Activated naive CD8-positive, alpha-beta T cell treated with anti-CD3 and anti-CD28 coated beads, Interleukin-2, amount 10 ng/mL, durations not matched to agents 7 days and 5 days (primary cell): ENCODE measurements at regions of chr1 and their contacts with region 1.

Region 1: GRCh38 chr1:16366722-16367257 is at the start of gene SZRD1:
- DNase-seq: peak; percentile 91
- ATAC-seq: peak; percentile 90
- H3K4me3 Mint-ChIP-seq: peak within 1 kb of the TSS; percentile 97
- H3K27ac Mint-ChIP-seq: peak within 1 kb of the TSS; percentile 100
- H3K4me1 Mint-ChIP-seq: peaks cover 30% of the 10 kb centered on the region
- H3K27me3 Mint-ChIP-seq: no peaks in the 10 kb centered on the region
- total RNA-seq, gene SZRD1: 126 to 147 TPM

Region 2: DNA sequence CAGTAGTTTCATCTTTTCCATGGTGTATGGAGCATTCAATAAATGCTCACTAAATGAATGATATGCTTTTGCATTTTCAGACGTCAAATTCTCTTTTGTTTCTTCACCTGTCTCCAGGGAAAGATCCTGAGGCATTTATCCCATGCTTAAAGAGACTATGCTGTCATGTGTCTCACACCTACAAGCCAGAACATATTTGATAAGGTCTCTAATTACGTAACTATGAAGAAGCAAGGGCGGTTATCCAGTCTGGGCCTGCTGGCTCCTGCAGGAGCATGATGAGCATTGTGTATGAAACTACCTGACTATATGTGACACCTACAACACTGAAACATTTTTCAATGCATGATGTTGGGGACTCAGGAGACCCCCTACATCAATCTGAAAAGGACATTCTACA is 66.4 kb before region 1 on chr1:
- POLR2A ChIA-PET with region 1: no interaction called
- DNase-seq: no peak
- ATAC-seq: no peak
- H3K4me3 Mint-ChIP-seq: no peak overlapping the region
- H3K27ac Mint-ChIP-seq: no peak overlapping the region
- H3K4me1 Mint-ChIP-seq: no peaks in the 10 kb centered on the region
- H3K27me3 Mint-ChIP-seq: no peaks in the 10 kb centered on the region

Region 3: GRCh38 chr1:16351994-16352841 is 14.6 kb before region 1 on chr1 and contains the start of gene FBXO42:
- POLR2A ChIA-PET with region 1: interaction called, 27 read pairs
- DNase-seq: peak; percentile 98
- ATAC-seq: peak; percentile 96
- H3K4me3 Mint-ChIP-seq: peak within 1 kb of the TSS; percentile 98
- H3K27ac Mint-ChIP-seq: peak within 1 kb of the TSS; percentile 94
- H3K4me1 Mint-ChIP-seq: peaks cover 26% of the 10 kb centered on the region
- H3K27me3 Mint-ChIP-seq: no peaks in the 10 kb centered on the region
- total RNA-seq, gene FBXO42: 22.3 to 25.1 TPM

Region 4: GRCh38 chr1:16386454-16387113 is 19.8 kb after region 1 on chr1:
- POLR2A ChIA-PET with region 1: interaction called, 12 read pairs
- DNase-seq: no peak
- ATAC-seq: peak; percentile 44
- H3K4me3 Mint-ChIP-seq: peak overlapping the region; percentile 87
- H3K27ac Mint-ChIP-seq: peak overlapping the region; percentile 72
- H3K4me1 Mint-ChIP-seq: peaks cover 55% of the 10 kb centered on the region
- H3K27me3 Mint-ChIP-seq: no peaks in the 10 kb centered on the region

Region 5: DNA sequence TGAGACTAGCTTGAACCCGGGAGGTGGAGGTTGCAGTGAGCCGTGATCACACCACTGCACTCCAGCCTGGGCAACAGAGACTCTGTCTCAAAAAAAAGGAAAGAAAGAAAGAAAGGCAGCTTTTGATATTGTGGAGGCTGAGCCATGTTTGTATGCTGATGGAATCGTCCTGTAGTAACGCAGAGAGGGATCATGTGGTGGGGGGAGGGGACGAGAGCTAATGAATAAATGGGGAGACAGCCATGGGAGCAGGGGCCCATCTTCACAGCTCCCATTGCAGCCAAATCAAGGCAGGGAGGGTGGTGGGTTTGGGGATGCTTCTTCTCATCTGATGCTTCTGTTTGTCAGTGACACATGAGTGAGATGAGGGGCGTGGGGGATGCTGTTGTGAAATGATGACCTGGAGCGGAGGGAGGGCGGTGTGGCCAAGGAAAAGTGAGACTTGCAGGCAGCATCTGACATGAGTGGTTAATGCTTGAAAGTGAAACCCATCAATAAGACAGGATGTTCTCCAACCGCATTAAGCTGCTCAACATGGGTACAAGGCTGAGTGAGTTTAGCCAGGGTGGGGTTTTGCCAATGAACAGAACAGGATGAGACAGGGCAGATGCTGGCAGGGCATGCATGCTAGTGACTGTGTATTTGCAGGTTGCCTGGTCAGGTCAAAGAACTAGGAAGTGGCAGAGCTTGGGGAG is 53.8 kb after region 1 on chr1:
- POLR2A ChIA-PET with region 1: interaction called, 18 read pairs
- DNase-seq: peak; percentile 69
- ATAC-seq: peak; percentile 97
- H3K4me3 Mint-ChIP-seq: peak overlapping the region; percentile 68
- H3K27ac Mint-ChIP-seq: peak overlapping the region; percentile 94
- H3K4me1 Mint-ChIP-seq: peaks cover 28% of the 10 kb centered on the region
- H3K27me3 Mint-ChIP-seq: peaks cover 4% of the 10 kb centered on the region

Region 6: DNA sequence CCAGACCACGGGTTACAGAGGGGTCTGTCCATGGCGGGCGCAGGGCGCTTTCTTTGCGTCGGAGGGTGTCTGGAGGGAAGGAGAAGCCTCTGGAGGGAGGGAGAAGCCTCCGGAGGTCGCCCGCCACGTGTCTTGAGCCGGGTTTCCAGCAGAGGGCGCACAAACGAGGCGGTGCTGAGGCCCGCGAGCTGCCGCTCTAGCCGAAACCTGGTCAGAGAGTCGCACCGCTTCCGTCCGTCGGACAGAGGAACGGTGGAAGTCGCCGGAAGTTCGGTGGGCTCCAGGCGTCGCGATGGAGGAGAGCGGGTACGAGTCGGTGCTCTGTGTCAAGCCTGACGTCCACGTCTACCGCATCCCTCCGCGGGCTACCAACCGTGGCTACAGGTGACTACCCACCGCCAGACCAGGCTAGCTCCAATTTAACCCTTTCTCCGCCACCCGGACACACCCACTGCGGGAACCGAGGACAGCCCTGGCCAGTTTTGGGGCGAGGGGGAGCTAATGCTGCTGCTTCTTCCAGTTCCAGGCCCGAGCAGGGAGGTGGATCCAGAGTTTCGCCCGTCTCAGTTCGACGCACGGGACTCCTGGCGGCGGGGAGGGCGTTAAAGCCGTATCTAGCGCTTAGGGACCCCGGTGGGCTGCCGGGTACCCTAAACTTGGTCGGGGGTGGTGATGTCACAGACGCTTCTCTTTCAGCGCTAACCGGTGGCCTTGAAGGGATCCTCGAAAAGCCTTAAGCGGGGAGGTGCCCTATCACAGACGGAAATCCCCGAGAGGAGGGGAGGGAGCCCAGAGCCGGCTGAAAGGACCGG is 73.9 kb after region 1 on chr1 and contains the start of gene NECAP2:
- POLR2A ChIA-PET with region 1: interaction called, 20 read pairs
- DNase-seq: peak; percentile 96
- ATAC-seq: peak; percentile 89
- H3K4me3 Mint-ChIP-seq: peak within 1 kb of the TSS; percentile 86
- H3K27ac Mint-ChIP-seq: peak within 1 kb of the TSS; percentile 76
- H3K4me1 Mint-ChIP-seq: peaks cover 25% of the 10 kb centered on the region
- H3K27me3 Mint-ChIP-seq: no peaks in the 10 kb centered on the region
- total RNA-seq, gene NECAP2: 110 to 111 TPM